AG04449 (cell line): ENCODE measurements at regions of chr13 and their contacts with region 1.

Region 1: GRCh38 chr13:21297914-21298831 is 121.7 kb downstream of the MRPL57 start:
- DNase-seq: peak; percentile 10
- H3K4me3 ChIP-seq: peak overlapping the region; percentile 94
- CTCF ChIP-seq: peak; percentile 97

Region 2: DNA sequence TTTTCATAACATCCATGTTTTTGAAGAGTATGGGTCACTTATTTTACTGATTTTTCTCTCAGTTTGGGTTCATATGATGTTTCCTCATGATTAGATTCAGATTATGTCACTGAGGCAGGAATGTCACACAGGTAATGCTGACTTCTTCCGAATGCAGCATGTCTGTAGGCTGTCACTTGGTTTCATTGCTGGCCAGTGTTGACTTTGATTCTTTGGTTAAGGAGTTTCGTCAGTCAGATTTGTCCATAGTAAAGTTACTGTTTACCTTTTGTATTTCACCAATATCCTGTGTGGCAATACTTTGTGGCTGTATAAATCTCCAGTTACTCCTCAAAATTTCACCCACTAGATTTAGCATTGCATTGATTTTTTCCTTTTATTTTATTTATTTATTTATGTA is 16.1 kb before region 1 on chr13:
- CTCF ChIA-PET with region 1: interaction called, 19 read pairs
- POLR2A ChIA-PET with region 1: no interaction called
- DNase-seq: no peak
- H3K4me3 ChIP-seq: no peak overlapping the region
- CTCF ChIP-seq: no peak

Region 3: GRCh38 chr13:21287331-21287907 is 10.8 kb before region 1 on chr13:
- CTCF ChIA-PET with region 1: interaction called, 19 read pairs
- POLR2A ChIA-PET with region 1: interaction called, 3 read pairs
- DNase-seq: no peak
- H3K4me3 ChIP-seq: no peak overlapping the region
- CTCF ChIP-seq: no peak

Region 4: GRCh38 chr13:21310221-21310620 is 12.0 kb after region 1 on chr13:
- CTCF ChIA-PET with region 1: interaction called, 30 read pairs
- POLR2A ChIA-PET with region 1: no interaction called
- DNase-seq: no peak
- H3K4me3 ChIP-seq: no peak overlapping the region
- CTCF ChIP-seq: no peak

Region 5: GRCh38 chr13:21318891-21319532 is 20.8 kb after region 1 on chr13:
- CTCF ChIA-PET with region 1: interaction called, 19 read pairs
- POLR2A ChIA-PET with region 1: no interaction called
- DNase-seq: no peak
- H3K4me3 ChIP-seq: no peak overlapping the region
- CTCF ChIP-seq: no peak

Region 6: DNA sequence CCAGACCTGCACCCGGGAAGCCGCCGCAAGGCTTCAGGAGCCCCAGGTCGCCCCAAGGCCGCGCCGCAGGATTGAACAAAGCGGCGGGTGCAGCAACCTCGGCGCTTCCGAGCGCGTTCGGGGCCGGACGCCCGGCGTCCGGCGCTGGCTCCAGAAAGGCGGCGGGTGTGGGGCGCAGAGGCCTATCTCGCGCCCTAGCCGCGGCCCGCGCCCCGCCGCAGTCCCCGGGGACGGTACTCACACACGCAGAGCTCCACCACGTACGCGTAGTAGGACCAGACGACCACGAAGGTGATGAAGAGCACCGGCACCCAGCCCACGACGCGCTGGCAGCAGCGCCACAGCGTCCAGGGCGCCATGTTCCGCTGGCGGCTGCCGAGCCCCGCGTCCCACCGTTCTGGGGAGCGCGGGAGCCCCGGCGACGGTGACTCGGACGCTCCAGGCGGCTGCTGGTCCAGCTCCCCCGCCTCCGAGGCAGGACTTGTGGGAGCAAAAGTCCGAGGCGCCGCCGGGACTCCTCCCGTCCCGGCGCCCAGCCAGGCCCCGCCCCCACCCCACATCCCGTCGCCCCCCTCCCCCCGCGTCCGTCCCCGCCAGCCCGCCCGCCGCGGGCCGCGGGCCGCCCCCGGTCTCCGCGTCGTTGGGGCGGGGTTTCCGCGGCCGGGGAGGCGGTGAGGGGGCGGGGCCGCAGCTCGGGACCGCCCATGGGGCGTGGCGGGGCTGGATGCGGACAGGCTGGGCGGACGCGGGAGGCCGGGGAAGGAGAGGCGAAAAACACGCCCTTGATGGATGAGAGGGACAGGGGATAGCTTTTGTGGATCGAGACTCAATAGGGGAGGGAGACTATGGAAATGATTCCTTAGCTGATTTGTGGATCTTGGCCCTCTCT is 160.9 kb after region 1 on chr13 and contains the start of gene ZDHHC20:
- CTCF ChIA-PET with region 1: interaction called, 15 read pairs
- POLR2A ChIA-PET with region 1: interaction called, 3 read pairs
- DNase-seq: no peak
- H3K4me3 ChIP-seq: peak within 1 kb of the TSS; percentile 91
- CTCF ChIP-seq: no peak